ENCODE measurements at regions of chr3 and their contacts with region 1.

Region 1: GRCh38 chr3:188154014-188154808 is at the start of gene LPP:
- DNase-seq: peak; percentile 74 to 87 (median 81)
- H3K4me3 ChIP-seq: peak within 1 kb of the TSS; percentile 72
- H3K4me3 Mint-ChIP-seq: peak within 1 kb of the TSS; percentile 83 to 95 (median 90)
- H3K27ac ChIP-seq: peak within 1 kb of the TSS; percentile 43
- H3K27ac Mint-ChIP-seq: peak within 1 kb of the TSS; percentile 77 to 96 (median 93)
- H3K4me1 ChIP-seq: peaks cover 25% of the 10 kb centered on the region
- H3K4me1 Mint-ChIP-seq: peaks cover 50 to 70% (median 56%) of the 10 kb centered on the region in 3 donors
- H3K27me3 ChIP-seq: no peaks in the 10 kb centered on the region
- H3K27me3 Mint-ChIP-seq: no peaks in the 10 kb centered on the region
- total RNA-seq, gene LPP: 13.4 to 18.0 TPM

Region 2: DNA sequence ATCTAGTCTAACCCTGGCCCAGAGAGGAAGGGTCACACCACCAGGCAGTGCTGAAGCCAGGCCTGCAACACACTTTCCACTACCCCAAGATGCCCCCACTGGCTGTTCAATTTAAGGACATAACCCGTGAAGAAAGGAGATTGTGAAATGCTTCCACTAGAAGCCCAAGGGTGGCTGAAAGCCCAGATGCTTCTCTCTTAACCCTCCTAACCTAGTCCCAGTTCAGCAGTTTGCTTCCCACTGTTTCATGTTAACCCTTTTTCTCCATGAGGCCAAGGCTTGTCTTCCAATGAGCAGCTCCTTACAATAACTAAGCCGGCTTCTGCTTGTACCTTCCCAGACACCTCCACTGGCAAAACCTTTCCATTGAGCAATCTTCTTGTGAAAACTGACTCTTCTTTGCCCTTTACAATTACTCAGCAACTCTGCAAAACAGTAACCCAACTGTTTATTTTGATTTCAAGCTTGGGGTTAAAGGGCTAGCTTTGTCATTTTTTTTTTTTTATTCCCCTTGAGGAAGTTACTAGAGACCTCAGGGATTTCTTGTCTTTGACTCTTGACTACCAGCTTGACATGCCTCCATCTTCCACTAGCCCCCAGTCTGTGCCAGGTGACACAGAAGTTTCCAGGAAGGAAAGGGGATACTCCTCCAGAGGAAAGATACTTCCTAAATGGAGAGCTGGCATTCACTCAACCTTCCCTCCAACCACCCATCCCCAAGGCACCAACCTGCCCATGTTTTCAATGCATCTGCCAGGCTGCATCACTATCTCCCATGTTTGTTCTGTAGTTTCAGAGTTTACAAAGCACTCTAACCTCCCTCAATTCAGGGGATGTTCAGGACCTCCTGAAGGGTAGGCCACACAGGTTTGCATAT is 198.9 kb before region 1 on chr3:
- CTCF ChIA-PET with region 1: no interaction called
- POLR2A ChIA-PET with region 1: interaction called, 11 read pairs
- DNase-seq: no peak
- H3K4me3 ChIP-seq: no peak overlapping the region
- H3K4me3 Mint-ChIP-seq: no peak overlapping the region
- H3K27ac ChIP-seq: no peak overlapping the region
- H3K27ac Mint-ChIP-seq: no peak overlapping the region
- H3K4me1 ChIP-seq: peaks cover 34% of the 10 kb centered on the region
- H3K4me1 Mint-ChIP-seq: peaks cover 47 to 61% (median 55%) of the 10 kb centered on the region in 3 donors
- H3K27me3 ChIP-seq: no peaks in the 10 kb centered on the region
- H3K27me3 Mint-ChIP-seq: no peaks in the 10 kb centered on the region

Region 3: DNA sequence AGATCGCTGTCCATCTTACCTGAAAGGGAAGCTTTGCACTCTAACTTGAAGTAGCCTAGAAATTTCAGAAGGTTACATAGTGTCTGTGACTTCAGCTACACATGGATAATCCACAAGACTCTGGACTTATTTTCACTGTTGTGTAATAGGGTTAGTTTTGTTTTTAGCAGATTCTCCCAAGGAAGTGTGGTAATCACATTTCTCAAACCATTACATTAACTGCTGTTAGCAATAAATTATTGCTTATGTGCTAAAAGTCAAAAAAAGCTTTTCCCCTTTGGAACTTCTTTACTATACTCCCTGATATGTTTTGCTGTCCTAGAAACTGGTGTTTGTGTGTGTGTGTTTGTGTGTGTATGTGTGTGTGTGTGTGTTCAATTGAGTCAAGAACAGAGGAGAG is 665.7 kb after region 1 on chr3:
- CTCF ChIA-PET with region 1: no interaction called
- POLR2A ChIA-PET with region 1: no interaction called
- DNase-seq: no peak
- H3K4me3 ChIP-seq: no peak overlapping the region
- H3K4me3 Mint-ChIP-seq: no peak overlapping the region
- H3K27ac ChIP-seq: no peak overlapping the region
- H3K27ac Mint-ChIP-seq: no peak overlapping the region
- H3K4me1 ChIP-seq: no peaks in the 10 kb centered on the region
- H3K4me1 Mint-ChIP-seq: no peaks in the 10 kb centered on the region
- H3K27me3 ChIP-seq: no peaks in the 10 kb centered on the region
- H3K27me3 Mint-ChIP-seq: no peaks in the 10 kb centered on the region